GM13976 (cell line): ENCODE measurements at regions of chr3 and their contacts with region 1.

Region 1: GRCh38 chr3:123719862-123720453 is 135.1 kb upstream of the HACD2 start:
- DNase-seq: no peak
- CTCF ChIP-seq: no peak

Region 2: GRCh38 chr3:123652346-123652984 is 67.5 kb before region 1 on chr3:
- in situ Hi-C with region 1: loop called (anchors 10 kb)
- DNase-seq: peak; percentile 78
- CTCF ChIP-seq: peak; percentile 87